ENCODE measurements at regions of chr20 and their contacts with region 1.

Region 1: GRCh38 chr20:23094927-23095326 is 8.8 kb upstream of the CD93 start:
- DNase-seq: no peak
- ATAC-seq: no peak
- H3K4me3 ChIP-seq: no peak overlapping the region
- H3K27ac ChIP-seq: no peak overlapping the region
- H3K4me1 ChIP-seq: no peaks in the 10 kb centered on the region
- H3K27me3 ChIP-seq: peaks cover 0 to 6% of the 10 kb centered on the region in 2 experiments; a peak in 1 of 4 replicates
- CTCF ChIP-seq: no peak
- EP300 ChIP-seq: no peak
- POLR2A ChIP-seq: no peak
- RAD21 ChIP-seq: no peak

Region 2: DNA sequence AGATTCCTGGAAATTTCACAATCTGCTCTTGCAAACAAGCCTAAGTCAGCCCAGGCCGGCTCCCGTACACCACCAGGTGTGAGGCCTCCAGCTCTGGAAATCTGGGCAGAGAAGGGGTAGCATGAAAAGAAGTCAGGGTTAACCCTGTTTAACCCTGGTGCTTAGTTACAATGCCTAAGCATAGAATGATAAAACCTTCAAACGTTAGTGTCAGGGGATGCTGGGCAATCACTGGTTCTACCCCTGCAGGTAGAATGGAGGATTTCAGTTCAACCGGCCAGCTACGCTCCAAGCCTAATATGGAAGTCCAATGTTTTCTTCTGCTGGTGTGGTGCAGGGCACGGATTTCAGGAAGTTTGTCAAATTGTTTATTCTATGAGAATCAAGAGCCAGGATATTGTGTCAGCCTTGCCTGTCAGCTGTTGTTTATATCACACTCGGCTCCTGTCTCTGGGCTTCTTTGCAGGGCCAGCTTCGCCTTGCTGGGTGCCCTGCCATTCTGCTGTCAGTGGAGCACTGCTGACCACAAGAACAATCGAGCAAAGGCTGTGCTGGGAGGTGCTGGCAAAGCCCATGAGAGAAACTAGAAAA is 11.4 kb after region 1 on chr20:
- CTCF ChIA-PET with region 1: interaction called, 4 read pairs
- POLR2A ChIA-PET with region 1: no interaction called
- RAD21 ChIA-PET with region 1: interaction called, 3 read pairs
- SMC1A ChIA-PET with region 1: interaction called, 52 read pairs
- in situ Hi-C with region 1: no loop called
- intact Hi-C with region 1: no loop called
- DNase-seq: no peak
- ATAC-seq: no peak
- H3K4me3 ChIP-seq: no peak overlapping the region
- H3K27ac ChIP-seq: no peak overlapping the region
- H3K4me1 ChIP-seq: no peaks in the 10 kb centered on the region
- H3K27me3 ChIP-seq: no peaks in the 10 kb centered on the region; a peak in 1 of 4 replicates
- CTCF ChIP-seq: no peak
- EP300 ChIP-seq: no peak
- POLR2A ChIP-seq: no peak
- RAD21 ChIP-seq: no peak